ENCODE measurements at regions of chr17 and their contacts with region 1.

Region 1: GRCh38 chr17:6913608-6914443 is 82.0 kb upstream of the ALOX12 start:
- DNase-seq: peak; percentile 87
- ATAC-seq: peak; percentile 80
- H3K4me3 Mint-ChIP-seq: peak overlapping the region; percentile 62
- H3K27ac Mint-ChIP-seq: no peak overlapping the region
- H3K4me1 Mint-ChIP-seq: peaks cover 22% of the 10 kb centered on the region
- H3K27me3 Mint-ChIP-seq: peaks cover 2% of the 10 kb centered on the region

Region 2: GRCh38 chr17:6666077-6666521 is 247.7 kb before region 1 on chr17:
- CTCF ChIA-PET with region 1: interaction called, 4 read pairs
- POLR2A ChIA-PET with region 1: interaction called, 3 read pairs
- intact Hi-C with region 1: loop called (anchors 5 to 10 kb)
- DNase-seq: peak; percentile 69
- ATAC-seq: peak; percentile 75
- H3K4me3 Mint-ChIP-seq: no peak overlapping the region
- H3K27ac Mint-ChIP-seq: no peak overlapping the region
- H3K4me1 Mint-ChIP-seq: peaks cover 7% of the 10 kb centered on the region
- H3K27me3 Mint-ChIP-seq: no peaks in the 10 kb centered on the region

Region 3: GRCh38 chr17:6868579-6868978 is 45.2 kb before region 1 on chr17:
- CTCF ChIA-PET with region 1: interaction called, 5 read pairs
- POLR2A ChIA-PET with region 1: no interaction called
- intact Hi-C with region 1: loop called in 1 of 2 experiments (anchors 5 kb)
- DNase-seq: no peak
- ATAC-seq: no peak
- H3K4me3 Mint-ChIP-seq: no peak overlapping the region
- H3K27ac Mint-ChIP-seq: no peak overlapping the region
- H3K4me1 Mint-ChIP-seq: no peaks in the 10 kb centered on the region
- H3K27me3 Mint-ChIP-seq: peaks cover 6% of the 10 kb centered on the region

Region 4: DNA sequence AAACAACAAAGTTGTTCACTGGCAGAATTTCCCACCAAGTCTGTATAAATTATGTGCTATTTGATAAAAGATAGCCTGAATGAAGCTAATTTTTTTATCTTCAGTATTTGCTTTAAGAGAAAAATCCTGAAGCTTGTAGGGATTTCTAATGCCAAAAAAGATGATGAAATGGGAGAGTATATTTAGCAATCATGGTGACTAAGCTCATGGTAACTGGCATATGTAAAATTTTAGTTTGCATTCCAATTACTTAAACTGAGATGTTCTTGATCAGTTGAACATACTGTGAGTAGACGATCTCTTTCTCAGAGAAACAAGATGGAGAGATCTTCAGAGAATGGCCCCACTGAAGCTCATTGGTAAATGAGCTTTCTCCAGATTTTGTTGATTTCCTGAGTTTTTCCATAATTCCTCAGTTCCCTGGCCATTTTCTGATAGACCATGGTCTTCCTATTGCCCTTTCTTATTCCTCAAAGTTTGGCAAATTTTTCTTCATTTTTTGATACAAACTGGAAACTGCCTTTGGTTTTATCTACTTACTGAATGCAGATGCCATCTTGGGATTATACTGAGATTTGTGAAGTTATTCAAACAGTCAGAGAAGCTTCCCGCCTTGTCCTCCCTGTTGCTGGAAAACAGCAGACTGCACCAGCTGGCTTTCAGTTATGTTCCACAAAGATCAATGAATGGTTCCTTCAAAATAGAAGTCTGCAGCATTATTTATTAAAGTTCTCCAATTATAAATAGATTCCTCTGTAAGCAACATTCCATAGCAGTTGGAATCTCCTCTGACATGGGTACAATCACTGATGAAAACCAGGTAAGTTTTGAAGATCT is 13.7 kb after region 1 on chr17:
- CTCF ChIA-PET with region 1: interaction called, 22 read pairs
- POLR2A ChIA-PET with region 1: no interaction called
- intact Hi-C with region 1: no loop called
- DNase-seq: no peak
- ATAC-seq: no peak
- H3K4me3 Mint-ChIP-seq: no peak overlapping the region
- H3K27ac Mint-ChIP-seq: no peak overlapping the region
- H3K4me1 Mint-ChIP-seq: peaks cover 20% of the 10 kb centered on the region
- H3K27me3 Mint-ChIP-seq: no peaks in the 10 kb centered on the region

Region 5: DNA sequence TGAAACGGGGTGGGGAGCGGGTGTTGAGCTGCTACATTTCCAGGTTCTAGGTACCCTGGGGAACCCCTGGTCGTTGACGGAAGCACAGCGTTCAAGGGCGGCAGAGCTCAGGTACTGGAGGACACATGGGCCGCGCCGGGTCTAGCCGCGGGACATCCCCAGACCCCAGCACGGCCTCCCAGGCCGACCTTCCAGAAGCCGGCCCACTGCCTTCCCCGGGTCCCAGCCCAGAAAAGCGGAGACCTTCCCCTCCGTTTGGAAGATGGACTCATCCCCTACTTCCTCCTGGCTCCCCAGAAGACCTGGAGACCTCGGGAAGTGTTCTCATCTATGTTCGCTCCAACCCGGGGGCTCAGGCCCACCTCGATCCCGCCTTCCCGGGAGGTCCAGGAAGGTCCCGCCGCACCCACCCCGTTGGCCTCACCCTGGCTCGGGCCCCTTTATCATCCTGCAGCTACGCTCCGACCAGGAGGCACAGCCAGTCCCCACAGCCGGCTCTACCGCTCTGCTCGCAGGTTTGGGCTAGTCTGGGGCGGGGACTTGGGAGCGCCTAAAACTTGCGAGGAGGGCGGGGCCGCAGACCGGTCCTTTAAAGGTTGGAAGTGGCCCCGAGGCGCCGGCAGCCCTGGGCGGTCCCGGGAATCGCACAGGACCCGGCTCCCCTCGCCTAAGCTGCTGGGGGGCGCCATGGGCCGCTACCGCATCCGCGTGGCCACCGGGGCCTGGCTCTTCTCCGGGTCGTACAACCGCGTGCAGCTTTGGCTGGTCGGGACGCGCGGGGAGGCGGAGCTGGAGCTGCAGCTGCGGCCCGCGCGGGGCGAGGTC is 81.8 kb after region 1 on chr17 and contains the start of gene ALOX12:
- CTCF ChIA-PET with region 1: interaction called, 11 read pairs
- POLR2A ChIA-PET with region 1: no interaction called
- intact Hi-C with region 1: no loop called
- DNase-seq: no peak
- ATAC-seq: no peak
- H3K4me3 Mint-ChIP-seq: no peak within 1 kb of the TSS
- H3K27ac Mint-ChIP-seq: no peak within 1 kb of the TSS
- H3K4me1 Mint-ChIP-seq: no peaks in the 10 kb centered on the region
- H3K27me3 Mint-ChIP-seq: no peaks in the 10 kb centered on the region
- total RNA-seq, gene ALOX12: not detected

Region 6: GRCh38 chr17:7021993-7022778 is 108.4 kb after region 1 on chr17:
- CTCF ChIA-PET with region 1: interaction called, 20 read pairs
- POLR2A ChIA-PET with region 1: no interaction called
- intact Hi-C with region 1: loop called (anchors 1 kb)
- DNase-seq: peak; percentile 89
- ATAC-seq: peak; percentile 79
- H3K4me3 Mint-ChIP-seq: peak overlapping the region; percentile 44
- H3K27ac Mint-ChIP-seq: peak overlapping the region; percentile 55
- H3K4me1 Mint-ChIP-seq: peaks cover 43% of the 10 kb centered on the region
- H3K27me3 Mint-ChIP-seq: peaks cover 12% of the 10 kb centered on the region

Region 7: GRCh38 chr17:7136266-7136877 is 222.5 kb after region 1 on chr17:
- CTCF ChIA-PET with region 1: interaction called, 10 read pairs
- POLR2A ChIA-PET with region 1: no interaction called
- intact Hi-C with region 1: loop called in 1 of 2 experiments (anchors 2 kb)
- DNase-seq: peak; percentile 89
- ATAC-seq: no peak
- H3K4me3 Mint-ChIP-seq: no peak overlapping the region
- H3K27ac Mint-ChIP-seq: no peak overlapping the region
- H3K4me1 Mint-ChIP-seq: peaks cover 21% of the 10 kb centered on the region
- H3K27me3 Mint-ChIP-seq: no peaks in the 10 kb centered on the region